ENCODE measurements at regions of chr19 and their contacts with region 1.

Region 1: GRCh38 chr19:38640368-38640767 is 7.1 kb upstream of the ACTN4 start:
- DNase-seq: no peak
- H3K4me3 ChIP-seq: no peak overlapping the region
- H3K27ac ChIP-seq: no peak overlapping the region
- H3K4me1 ChIP-seq: peaks cover 0 to 2% (median 0%) of the 10 kb centered on the region in 4 experiments; a peak in 3 of 7 replicates
- H3K27me3 ChIP-seq: no peaks in the 10 kb centered on the region
- CTCF ChIP-seq: no peak
- EP300 ChIP-seq: no peak
- POLR2A ChIP-seq: no peak
- RAD21 ChIP-seq: no peak

Region 2: DNA sequence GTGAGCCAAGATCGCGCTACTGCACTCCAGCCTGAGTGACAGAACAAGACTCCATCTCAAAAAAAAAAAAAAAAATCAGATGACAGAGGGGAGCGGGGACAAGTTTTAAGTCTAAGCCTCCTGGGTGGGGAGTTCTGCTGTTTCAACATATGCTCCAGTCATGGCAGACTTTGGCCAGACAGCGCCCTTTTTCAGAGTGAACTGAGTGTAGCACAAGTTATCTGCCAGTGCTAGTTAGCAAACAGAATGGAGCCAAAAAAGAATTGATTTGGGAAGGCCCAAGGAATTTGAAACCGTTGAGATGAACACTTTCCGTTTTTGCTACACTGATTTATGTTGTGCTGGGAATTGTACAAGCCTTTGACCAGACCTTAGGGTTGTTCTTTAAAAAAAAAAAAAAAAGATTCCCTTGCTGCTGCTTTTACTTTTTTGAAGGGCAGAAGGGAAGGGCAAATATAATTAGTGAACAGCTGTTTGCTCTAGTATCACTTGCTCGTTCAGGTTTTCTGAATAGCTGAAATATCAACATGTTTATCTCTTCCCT is 12.7 kb after region 1 on chr19:
- CTCF ChIA-PET with region 1: interaction called, 62 read pairs
- POLR2A ChIA-PET with region 1: interaction called, 374 read pairs
- DNase-seq: no peak
- H3K4me3 ChIP-seq: no peak overlapping the region
- H3K27ac ChIP-seq: no peak overlapping the region
- H3K4me1 ChIP-seq: peaks cover 15 to 35% (median 24%) of the 10 kb centered on the region in 4 experiments
- H3K27me3 ChIP-seq: no peaks in the 10 kb centered on the region
- CTCF ChIP-seq: no peak
- EP300 ChIP-seq: no peak
- POLR2A ChIP-seq: peak in 1 of 2 experiments; percentile 27; a peak in 1 of 3 replicates
- RAD21 ChIP-seq: no peak

Region 3: DNA sequence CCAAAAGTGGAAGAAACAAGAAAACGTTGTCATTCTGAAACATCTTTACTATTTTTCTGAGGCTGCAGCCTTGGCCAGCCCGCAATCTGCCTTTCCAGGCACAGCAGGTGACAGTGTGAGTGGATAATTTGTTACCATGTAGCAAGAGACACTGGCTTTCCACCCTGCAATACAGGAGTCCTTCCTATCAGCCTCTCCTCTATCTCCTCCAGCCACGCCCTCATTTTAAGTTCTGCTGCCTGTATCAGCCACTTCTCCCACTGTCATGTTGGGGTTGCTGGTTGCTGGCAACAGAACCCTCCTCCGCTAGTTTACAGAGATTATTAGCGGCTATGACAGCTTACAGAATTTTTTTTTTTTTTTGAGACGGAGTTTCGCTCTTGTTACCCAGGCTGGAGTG is 140.7 kb after region 1 on chr19:
- CTCF ChIA-PET with region 1: no interaction called
- POLR2A ChIA-PET with region 1: no interaction called
- DNase-seq: no peak
- H3K4me3 ChIP-seq: no peak overlapping the region
- H3K27ac ChIP-seq: no peak overlapping the region
- H3K4me1 ChIP-seq: no peaks in the 10 kb centered on the region
- H3K27me3 ChIP-seq: no peaks in the 10 kb centered on the region
- CTCF ChIP-seq: no peak
- EP300 ChIP-seq: no peak
- POLR2A ChIP-seq: no peak
- RAD21 ChIP-seq: no peak

Measured in H1 (cell line).